HepG2 (cell line): ENCODE measurements at regions of chr1 and their contacts with region 1.

Region 1: DNA sequence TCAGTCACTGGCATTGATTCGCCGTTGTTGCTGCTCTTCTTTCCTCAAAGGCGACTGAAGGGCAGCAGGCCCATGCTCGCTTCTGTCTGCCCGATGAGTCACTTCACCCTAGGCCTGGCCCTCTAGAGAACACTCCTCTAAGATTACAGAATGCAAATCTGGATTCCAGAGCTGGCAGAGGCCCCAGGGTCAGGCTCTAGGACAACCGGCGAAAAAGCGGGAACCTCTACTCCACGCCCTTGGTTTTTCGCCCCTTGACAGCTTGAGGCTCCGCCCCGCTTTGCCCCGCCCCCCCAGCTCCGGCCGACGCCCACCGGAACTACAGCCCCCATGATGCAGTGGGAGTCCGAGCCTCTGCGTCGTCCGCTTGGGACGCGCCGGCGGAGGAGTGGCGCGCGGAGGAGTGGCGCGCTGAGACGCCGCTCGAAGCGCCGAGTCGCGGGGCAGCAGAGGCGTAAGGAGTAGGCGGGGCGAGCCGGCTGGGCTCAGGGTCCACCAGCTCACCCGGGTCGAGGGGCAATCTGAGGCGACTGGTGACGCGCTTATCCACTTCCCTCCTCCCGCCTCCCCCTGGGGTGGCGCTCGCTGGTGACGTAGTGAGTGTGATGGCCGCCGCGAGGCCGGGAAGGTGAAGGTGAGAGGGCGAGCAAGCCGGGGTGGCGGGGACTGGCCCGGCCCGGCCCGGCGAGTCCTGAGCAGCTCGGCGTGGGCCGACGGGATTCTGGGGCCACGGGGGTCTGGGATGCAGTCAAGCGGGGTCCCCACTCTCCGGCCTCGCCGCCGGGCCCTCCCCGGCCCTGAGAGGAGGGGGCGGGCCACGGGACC is at the start of gene MFN2:
- DNase-seq: peak; percentile 95
- ATAC-seq: peak; percentile 90
- H3K4me3 ChIP-seq: peak within 1 kb of the TSS; percentile 91 to 98 (median 97)
- H3K27ac ChIP-seq: peak within 1 kb of the TSS; percentile 81
- H3K4me1 ChIP-seq: peaks cover 57% of the 10 kb centered on the region
- H3K27me3 ChIP-seq: peaks cover 0 to 3% of the 10 kb centered on the region in 2 experiments; a peak in 1 of 5 replicates
- CTCF ChIP-seq: 0 out of 2 replicates have a peak, but pooled peaks have one; percentile 19
- EP300 ChIP-seq: 0 out of 4 replicates have a peak, but pooled peaks of 1 of the 2 experiments have one; percentile 7
- POLR2A ChIP-seq: peak; percentile 67 to 77
- RAD21 ChIP-seq: no peak; the same call in 1 of the 2 replicates
- total RNA-seq, gene MFN2: 60.9 and 76.3 TPM in 2 replicates

Region 2: DNA sequence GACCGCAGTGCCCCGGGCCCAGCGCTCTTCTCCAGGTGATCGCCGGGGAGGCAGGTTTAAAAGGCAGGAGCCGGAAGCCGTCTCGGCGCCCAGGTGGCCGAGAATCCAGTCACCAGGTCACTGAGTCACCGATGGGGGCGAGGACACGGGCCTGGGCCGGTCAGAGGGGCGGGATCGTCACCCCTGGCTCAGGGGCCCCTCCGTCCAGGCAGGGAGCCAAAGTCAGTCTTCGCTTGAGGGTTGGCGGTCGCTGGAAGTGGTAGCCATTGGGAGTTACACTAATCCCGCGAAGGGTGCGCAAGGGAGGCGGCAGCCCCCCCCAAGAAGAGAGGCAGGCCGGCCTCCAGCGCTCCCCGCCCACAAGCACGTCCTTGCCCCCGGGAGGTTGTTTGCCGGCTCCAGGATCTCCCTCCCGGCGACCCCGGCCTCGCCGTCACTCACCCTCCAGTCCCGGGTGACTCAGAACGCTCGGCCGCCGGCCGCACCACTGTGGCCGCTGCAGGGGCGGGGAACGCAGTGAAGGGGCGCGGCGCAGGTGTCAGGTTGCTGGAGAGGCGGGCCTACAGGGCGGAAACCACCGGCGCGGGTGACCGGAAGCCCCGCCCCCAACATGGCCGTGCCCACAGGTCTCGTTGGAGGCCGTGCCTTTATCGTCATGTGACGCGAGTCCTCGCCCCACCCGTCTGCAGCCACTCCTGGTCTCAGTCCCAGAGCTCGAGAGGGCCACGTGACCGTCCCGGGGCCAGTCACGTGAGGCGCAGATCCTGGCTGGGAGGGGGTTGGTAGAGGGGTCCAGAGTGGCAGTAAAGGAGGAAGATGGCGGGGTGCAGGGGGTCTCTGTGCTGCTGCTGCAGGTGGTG is 174.4 kb before region 1 on chr1 and contains the starts of genes CLCN6 and MTHFR:
- CTCF ChIA-PET with region 1: no interaction called
- POLR2A ChIA-PET with region 1: interaction called, 17 read pairs
- in situ Hi-C with region 1: no loop called
- intact Hi-C with region 1: no loop called
- DNase-seq: peak; percentile 98
- ATAC-seq: peak; percentile 92
- H3K4me3 ChIP-seq: peak within 1 kb of the TSS; percentile 86 to 88 (median 87)
- H3K27ac ChIP-seq: peak within 1 kb of the TSS; percentile 94
- H3K4me1 ChIP-seq: peaks cover 69% of the 10 kb centered on the region
- H3K27me3 ChIP-seq: no peaks in the 10 kb centered on the region; a peak in 1 of 5 replicates
- CTCF ChIP-seq: peak; percentile 18; the same call in 1 of the 2 replicates
- EP300 ChIP-seq: peak in 1 of 2 experiments; percentile 48; a peak in 1 of 4 replicates
- POLR2A ChIP-seq: peak; percentile 70 to 82
- RAD21 ChIP-seq: peak; percentile 55; the same call in 1 of the 2 replicates
- total RNA-seq, gene CLCN6: 10.1 and 19.3 TPM in 2 replicates
- total RNA-seq, gene MTHFR: 5.0 and 8.2 TPM in 2 replicates

Region 3: GRCh38 chr1:11831945-11832725 is 147.9 kb before region 1 on chr1:
- CTCF ChIA-PET with region 1: no interaction called
- POLR2A ChIA-PET with region 1: no interaction called
- in situ Hi-C with region 1: no loop called
- intact Hi-C with region 1: no loop called
- DNase-seq: no peak
- ATAC-seq: no peak
- H3K4me3 ChIP-seq: no peak overlapping the region
- H3K27ac ChIP-seq: no peak overlapping the region
- H3K4me1 ChIP-seq: no peaks in the 10 kb centered on the region
- H3K27me3 ChIP-seq: no peaks in the 10 kb centered on the region
- CTCF ChIP-seq: no peak
- EP300 ChIP-seq: no peak
- POLR2A ChIP-seq: 0 out of 4 replicates have a peak, but pooled peaks of 1 of the 2 experiments have one; percentile 22
- RAD21 ChIP-seq: no peak

Region 4: DNA sequence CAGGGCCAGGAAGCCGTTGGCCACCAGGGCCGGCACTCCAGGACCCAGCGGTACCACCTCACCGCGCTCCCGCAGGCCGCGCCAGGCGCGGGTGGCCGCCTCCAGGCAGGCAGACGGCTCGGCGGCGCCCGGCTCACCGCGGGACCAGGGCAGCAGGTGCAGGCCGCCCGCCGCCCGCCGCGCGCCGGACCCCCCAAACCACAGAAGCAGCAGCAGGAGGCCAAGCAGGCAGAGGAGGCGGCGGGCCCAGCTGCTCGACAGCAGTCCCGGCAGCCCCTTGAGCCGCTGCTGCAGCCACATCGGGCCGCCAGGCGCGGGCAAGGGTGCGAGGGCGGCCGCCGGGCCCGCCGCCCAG is 54.1 kb before region 1 on chr1:
- CTCF ChIA-PET with region 1: no interaction called
- POLR2A ChIA-PET with region 1: interaction called, 17 read pairs
- in situ Hi-C with region 1: no loop called
- intact Hi-C with region 1: no loop called
- DNase-seq: no peak
- ATAC-seq: no peak
- H3K4me3 ChIP-seq: peak overlapping the region; percentile 60 to 79 (median 66); a peak in 4 of 6 replicates
- H3K27ac ChIP-seq: peak overlapping the region; percentile 75
- H3K4me1 ChIP-seq: peaks cover 77% of the 10 kb centered on the region
- H3K27me3 ChIP-seq: no peaks in the 10 kb centered on the region; a peak in 1 of 5 replicates
- CTCF ChIP-seq: no peak
- EP300 ChIP-seq: no peak
- POLR2A ChIP-seq: no peak
- RAD21 ChIP-seq: peak; percentile 34; the same call in 1 of the 2 replicates

Region 5: GRCh38 chr1:11934302-11935056 is 45.6 kb before region 1 on chr1 and contains the start of gene PLOD1:
- CTCF ChIA-PET with region 1: no interaction called
- POLR2A ChIA-PET with region 1: interaction called, 11 read pairs
- in situ Hi-C with region 1: no loop called
- intact Hi-C with region 1: no loop called
- DNase-seq: peak; percentile 79
- ATAC-seq: peak; percentile 95
- H3K4me3 ChIP-seq: peak within 1 kb of the TSS; percentile 77 to 89 (median 82)
- H3K27ac ChIP-seq: peak within 1 kb of the TSS; percentile 84
- H3K4me1 ChIP-seq: peaks cover 73% of the 10 kb centered on the region
- H3K27me3 ChIP-seq: no peaks in the 10 kb centered on the region; a peak in 1 of 5 replicates
- CTCF ChIP-seq: no peak; the same call in 1 of the 2 replicates
- EP300 ChIP-seq: no peak
- POLR2A ChIP-seq: peak; percentile 59 to 91
- RAD21 ChIP-seq: peak; percentile 44; the same call in 1 of the 2 replicates
- total RNA-seq, gene PLOD1: 31.0 and 70.1 TPM in 2 replicates

Region 6: GRCh38 chr1:11967028-11967547 is 13.0 kb before region 1 on chr1:
- CTCF ChIA-PET with region 1: no interaction called
- POLR2A ChIA-PET with region 1: interaction called, 14 read pairs
- in situ Hi-C with region 1: no loop called
- intact Hi-C with region 1: loop called (anchors 1 kb)
- DNase-seq: peak; percentile 89
- ATAC-seq: peak; percentile 94
- H3K4me3 ChIP-seq: no peak overlapping the region
- H3K27ac ChIP-seq: peak overlapping the region; percentile 26
- H3K4me1 ChIP-seq: peaks cover 8% of the 10 kb centered on the region; the same call in 1 of the 2 replicates
- H3K27me3 ChIP-seq: no peaks in the 10 kb centered on the region
- CTCF ChIP-seq: peak; percentile 94
- EP300 ChIP-seq: no peak
- POLR2A ChIP-seq: no peak; a peak in 1 of 4 replicates
- RAD21 ChIP-seq: peak; percentile 92

Region 7: GRCh38 chr1:11990303-11991032 is 10.4 kb after region 1 on chr1:
- CTCF ChIA-PET with region 1: no interaction called
- POLR2A ChIA-PET with region 1: interaction called, 33 read pairs
- in situ Hi-C with region 1: no loop called
- intact Hi-C with region 1: no loop called
- DNase-seq: peak; percentile 67
- ATAC-seq: peak; percentile 84
- H3K4me3 ChIP-seq: no peak overlapping the region
- H3K27ac ChIP-seq: peak overlapping the region; percentile 73
- H3K4me1 ChIP-seq: peaks cover 45% of the 10 kb centered on the region
- H3K27me3 ChIP-seq: no peaks in the 10 kb centered on the region
- CTCF ChIP-seq: no peak
- EP300 ChIP-seq: no peak; a peak in 1 of 4 replicates
- POLR2A ChIP-seq: peak in 1 of 2 experiments; percentile 49; a peak in 1 of 4 replicates
- RAD21 ChIP-seq: no peak

Region 8: GRCh38 chr1:12019858-12020509 is 39.9 kb after region 1 on chr1:
- CTCF ChIA-PET with region 1: no interaction called
- POLR2A ChIA-PET with region 1: interaction called, 23 read pairs
- in situ Hi-C with region 1: no loop called
- intact Hi-C with region 1: no loop called
- DNase-seq: no peak
- ATAC-seq: peak; percentile 44; the same call in 2 of the 3 replicates
- H3K4me3 ChIP-seq: peak overlapping the region; percentile 68 to 85 (median 82)
- H3K27ac ChIP-seq: peak overlapping the region; percentile 91
- H3K4me1 ChIP-seq: peaks cover 9% of the 10 kb centered on the region
- H3K27me3 ChIP-seq: no peaks in the 10 kb centered on the region
- CTCF ChIP-seq: no peak
- EP300 ChIP-seq: no peak
- POLR2A ChIP-seq: no peak
- RAD21 ChIP-seq: no peak